ENCODE measurements at regions of chr13 and their contacts with region 1.

Region 1: GRCh38 chr13:48303359-48304142 is at the start of gene RB1:
- DNase-seq: peak; percentile 91 to 93
- H3K4me3 ChIP-seq: peak within 1 kb of the TSS; percentile 82 to 98 (median 93)
- H3K27ac ChIP-seq: peak within 1 kb of the TSS; percentile 96 to 100 (median 98)
- H3K4me1 ChIP-seq: peaks cover 11 to 18% of the 10 kb centered on the region in 2 donors
- H3K27me3 ChIP-seq: no peaks in the 10 kb centered on the region
- CTCF ChIP-seq: no peak
- POLR2A ChIP-seq: peak; percentile 81 to 98
- total RNA-seq, gene RB1: 38.5 to 62.1 (median 41.8) TPM

Region 2: GRCh38 chr13:48094781-48095502 is 208.6 kb before region 1 on chr13 and contains the start of gene MED4:
- intact Hi-C with region 1: loop called (anchors 10 kb)
- DNase-seq: peak; percentile 92 to 96
- H3K4me3 ChIP-seq: peak within 1 kb of the TSS; percentile 81 to 95 (median 90)
- H3K27ac ChIP-seq: peak within 1 kb of the TSS; percentile 30 to 85 (median 61)
- H3K4me1 ChIP-seq: peaks cover 10 to 15% of the 10 kb centered on the region in 2 donors
- H3K27me3 ChIP-seq: no peaks in the 10 kb centered on the region
- CTCF ChIP-seq: peak; percentile 99
- POLR2A ChIP-seq: peak in 1 of 2 donors; percentile 79
- total RNA-seq, gene MED4: 32.8 to 36.8 (median 34.5) TPM

Region 3: GRCh38 chr13:48233046-48233907 is 70.3 kb before region 1 on chr13 and contains the start of gene ITM2B:
- intact Hi-C with region 1: loop called (anchors 5 kb)
- DNase-seq: peak; percentile 78 to 81
- H3K4me3 ChIP-seq: peak within 1 kb of the TSS; percentile 45 to 99 (median 98)
- H3K27ac ChIP-seq: peak within 1 kb of the TSS; percentile 99 to 100 (median 100)
- H3K4me1 ChIP-seq: peaks cover 15 to 28% of the 10 kb centered on the region in 2 donors
- H3K27me3 ChIP-seq: no peaks in the 10 kb centered on the region
- CTCF ChIP-seq: peak in 2 of 6 experiments; percentile 9 to 42
- POLR2A ChIP-seq: peak; percentile 91 to 94
- total RNA-seq, gene ITM2B: 550 to 716 (median 624) TPM